ENCODE measurements at regions of chr11 and their contacts with region 1.

Region 1: GRCh38 chr11:67382276-67383136 is 9.1 kb upstream of the CLCF1 start:
- DNase-seq: peak; percentile 94

Region 2: GRCh38 chr11:67265633-67266423 is 116.7 kb before region 1 on chr11:
- intact Hi-C with region 1: loop called (anchors 5 kb)
- DNase-seq: peak; percentile 93

Region 3: DNA sequence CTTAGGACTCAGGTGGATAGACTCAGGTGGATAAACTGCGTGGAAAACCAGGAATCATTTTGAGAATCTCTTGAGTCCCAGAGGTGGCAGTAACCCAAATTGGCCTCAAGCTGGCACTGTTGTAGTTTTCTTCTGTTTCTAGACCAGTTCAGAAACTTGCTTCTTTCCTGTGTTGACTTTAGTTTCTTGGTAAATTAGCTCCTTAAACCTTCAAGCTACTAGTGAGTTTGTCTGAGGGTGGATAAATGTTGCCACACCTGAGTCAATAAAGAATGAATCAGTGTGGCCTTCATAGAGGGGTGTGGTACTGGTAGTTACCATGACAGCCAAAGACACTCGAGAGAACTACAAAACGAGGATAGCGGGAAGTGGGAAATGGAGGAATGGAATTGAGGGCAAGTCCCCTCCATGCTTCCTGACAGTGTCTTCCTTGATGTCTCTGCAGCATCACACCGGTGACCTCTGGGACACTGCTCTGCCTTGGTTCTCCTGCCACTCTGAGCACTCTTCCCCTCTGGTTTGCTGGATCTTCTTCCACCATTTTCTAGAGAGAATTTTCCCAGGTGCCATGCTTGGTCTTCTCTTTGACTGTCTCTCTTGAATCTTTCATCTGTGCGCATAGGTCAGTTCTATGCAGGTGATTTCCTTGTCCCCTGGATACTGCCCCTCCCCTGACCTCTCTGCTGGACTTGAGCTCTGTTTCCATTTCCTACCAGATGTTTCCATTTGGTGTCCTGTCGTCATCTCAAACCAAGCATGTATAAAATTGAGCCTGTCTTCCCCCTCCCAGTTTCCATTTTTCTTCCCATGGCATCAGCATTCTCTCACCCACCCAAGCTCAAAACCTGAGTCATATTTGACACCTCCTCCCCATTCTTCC is 36.3 kb before region 1 on chr11:
- intact Hi-C with region 1: loop called (anchors 5 kb)
- DNase-seq: no peak

Region 4: DNA sequence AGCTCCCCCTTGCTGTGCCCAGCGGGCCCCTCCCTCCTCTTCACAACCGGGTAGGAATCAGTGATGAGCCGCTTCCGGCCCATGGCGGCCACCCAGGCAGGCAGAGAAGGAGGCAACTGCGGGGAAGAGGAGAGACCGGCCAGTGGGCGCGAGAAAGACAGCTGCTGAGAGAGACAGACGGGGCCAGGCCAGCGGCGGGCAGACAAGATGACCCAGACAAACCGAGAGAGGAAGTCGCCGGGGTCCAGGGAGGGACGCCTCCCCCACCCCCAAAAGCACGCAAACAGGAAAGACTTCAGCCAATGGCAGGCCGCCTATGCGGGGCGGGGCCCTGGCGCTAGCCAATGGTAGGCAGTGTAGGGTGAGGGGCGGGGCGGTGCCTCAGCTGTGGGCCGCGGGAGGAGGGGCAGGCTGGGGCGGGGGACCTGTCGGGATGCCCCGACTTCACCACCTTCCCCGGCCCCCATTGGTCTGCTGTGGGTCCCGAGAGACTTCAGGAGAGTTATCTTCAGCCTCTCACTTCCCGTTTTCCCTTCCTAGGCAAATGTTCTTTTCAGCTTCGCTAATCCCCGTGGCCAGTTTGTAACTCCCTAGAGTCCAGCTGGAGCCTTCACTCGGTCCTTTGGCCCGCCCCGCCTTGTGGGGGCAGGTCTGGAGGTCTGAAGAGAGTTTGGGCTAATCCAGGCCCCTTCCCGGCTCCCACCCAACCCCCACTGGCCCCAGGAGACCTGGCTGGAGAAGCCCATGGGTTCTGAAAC is 29.0 kb before region 1 on chr11 and contains the start of gene POLD4:
- intact Hi-C with region 1: loop called (anchors 1 kb)
- DNase-seq: peak; percentile 100
- total RNA-seq, gene POLD4: 61.6 TPM

Region 5: GRCh38 chr11:67523556-67524479 is 141.3 kb after region 1 on chr11:
- intact Hi-C with region 1: no loop called
- DNase-seq: no peak